WTC11 (cell line): ENCODE measurements at regions of chr3 and their contacts with region 1.

Region 1: DNA sequence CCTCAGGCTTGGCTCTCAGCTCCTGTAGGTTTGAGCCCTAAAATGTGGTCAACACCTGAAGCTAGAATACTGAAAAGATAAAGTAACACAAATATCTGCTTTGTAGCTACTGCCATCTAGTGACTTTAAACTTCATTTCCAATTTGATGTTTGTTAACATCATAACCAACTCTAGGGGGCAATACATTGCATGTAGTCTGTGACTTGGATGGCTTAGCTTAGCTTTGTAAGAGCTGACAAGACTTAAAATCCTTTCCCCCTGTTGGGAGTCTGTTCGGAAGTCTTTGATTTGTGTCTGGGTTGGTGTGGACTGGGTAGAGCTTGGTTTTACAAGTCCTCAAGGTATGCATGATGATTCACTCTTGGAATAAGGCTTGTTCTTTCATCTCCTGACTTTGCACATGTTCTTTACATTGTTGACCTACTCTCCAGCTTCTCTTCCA is 51.7 kb downstream of the SCN11A start:
- DNase-seq: no peak
- ATAC-seq: peak; percentile 96
- H3K4me3 Mint-ChIP-seq: no peak overlapping the region
- H3K27ac Mint-ChIP-seq: no peak overlapping the region
- H3K4me1 Mint-ChIP-seq: peaks cover 8% of the 10 kb centered on the region
- H3K27me3 Mint-ChIP-seq: no peaks in the 10 kb centered on the region
- CTCF ChIP-seq: peak; percentile 39

Region 2: DNA sequence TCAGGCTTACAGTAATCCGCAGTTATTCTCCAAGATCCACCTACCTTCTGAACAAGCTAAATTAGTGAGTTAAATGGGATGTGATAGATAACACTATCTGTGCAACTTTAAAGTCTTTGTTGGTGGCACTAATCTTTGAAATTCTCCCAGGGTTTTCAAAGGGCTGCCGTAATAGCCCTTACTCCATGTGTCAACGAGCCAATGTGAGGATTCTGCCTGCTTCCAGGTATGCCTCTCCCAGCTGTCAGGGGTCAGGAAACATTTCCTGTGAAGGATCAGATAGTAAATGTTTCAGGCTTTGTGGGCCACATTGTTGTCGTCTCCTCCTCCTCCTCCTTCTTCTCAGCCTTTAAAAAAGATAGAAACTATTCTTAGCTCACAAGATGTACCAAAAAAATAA is 330.4 kb before region 1 on chr3:
- CTCF ChIA-PET with region 1: interaction called, 15 read pairs
- POLR2A ChIA-PET with region 1: interaction called, 3 read pairs
- DNase-seq: no peak
- ATAC-seq: peak; percentile 57
- H3K4me3 Mint-ChIP-seq: no peak overlapping the region
- H3K27ac Mint-ChIP-seq: 0 out of 2 replicates have a peak overlapping the region, but pooled peaks have one; percentile 3
- H3K4me1 Mint-ChIP-seq: peaks cover 6% of the 10 kb centered on the region
- H3K27me3 Mint-ChIP-seq: no peaks in the 10 kb centered on the region
- CTCF ChIP-seq: no peak

Region 3: DNA sequence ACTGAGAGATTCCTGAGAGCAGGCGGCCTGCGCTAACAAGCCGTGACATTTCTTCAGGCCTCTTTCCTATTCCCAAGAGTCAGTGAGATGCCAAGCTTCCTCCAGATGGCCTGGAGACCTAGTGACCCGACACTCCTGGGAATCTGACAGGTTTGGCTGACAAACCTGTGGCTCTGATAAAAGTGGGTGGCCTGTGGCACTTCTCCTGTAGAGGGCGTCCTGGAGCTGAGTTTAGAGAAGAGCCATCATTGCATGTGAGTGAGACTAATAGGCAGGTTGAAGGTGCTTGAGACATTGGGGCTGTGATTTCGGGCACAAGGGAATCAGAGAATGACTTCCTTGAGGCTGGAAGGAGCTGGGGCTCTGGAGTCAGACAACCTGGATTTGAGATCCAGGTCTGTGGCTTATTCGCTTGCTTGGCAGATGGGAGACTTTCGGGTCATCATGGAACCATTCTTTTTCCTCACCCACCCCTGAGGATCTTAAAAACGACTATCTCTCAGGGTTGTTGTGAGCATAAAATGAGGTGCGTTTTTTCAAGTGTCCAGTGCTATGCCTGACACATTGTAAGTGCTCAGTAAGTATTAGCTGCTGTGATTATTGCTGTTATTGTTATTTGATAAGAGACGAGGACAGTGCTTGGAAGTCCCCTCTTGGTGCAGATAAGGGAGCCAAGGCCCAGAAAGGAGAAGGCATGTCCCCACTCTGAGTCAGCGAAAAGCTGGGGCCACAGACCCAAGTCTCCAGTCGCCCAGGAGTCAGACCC is 261.2 kb before region 1 on chr3:
- CTCF ChIA-PET with region 1: interaction called, 56 read pairs
- POLR2A ChIA-PET with region 1: no interaction called
- DNase-seq: peak; percentile 91
- ATAC-seq: peak; percentile 93
- H3K4me3 Mint-ChIP-seq: no peak overlapping the region
- H3K27ac Mint-ChIP-seq: no peak overlapping the region
- H3K4me1 Mint-ChIP-seq: peaks cover 10% of the 10 kb centered on the region
- H3K27me3 Mint-ChIP-seq: peaks cover 2% of the 10 kb centered on the region; the same call in 1 of the 2 replicates
- CTCF ChIP-seq: peak; percentile 80

Region 4: GRCh38 chr3:38907426-38907825 is 92.6 kb before region 1 on chr3:
- CTCF ChIA-PET with region 1: interaction called, 31 read pairs
- POLR2A ChIA-PET with region 1: no interaction called
- DNase-seq: no peak
- ATAC-seq: no peak
- H3K4me3 Mint-ChIP-seq: no peak overlapping the region
- H3K27ac Mint-ChIP-seq: no peak overlapping the region
- H3K4me1 Mint-ChIP-seq: no peaks in the 10 kb centered on the region
- H3K27me3 Mint-ChIP-seq: peaks cover 11% of the 10 kb centered on the region
- CTCF ChIP-seq: no peak

Region 5: DNA sequence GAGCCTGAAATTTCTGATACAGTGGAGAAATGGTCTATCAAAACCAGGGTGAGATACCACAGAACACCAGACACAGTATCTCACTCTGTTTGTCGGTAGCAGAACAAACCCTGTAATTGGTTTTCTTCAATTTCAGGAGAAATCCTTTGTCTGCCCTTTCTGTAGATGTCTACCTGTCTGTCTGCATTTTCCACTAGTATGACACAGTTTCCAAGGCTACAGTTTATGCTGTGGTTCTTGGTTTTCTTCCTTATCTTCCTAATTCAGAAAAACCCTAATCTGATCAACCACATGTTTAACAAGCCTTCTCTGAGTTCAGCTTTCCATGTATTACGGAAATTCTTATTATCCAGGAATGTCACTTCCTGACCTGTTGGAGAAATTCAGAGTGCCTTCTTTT is 19.1 kb before region 1 on chr3:
- CTCF ChIA-PET with region 1: interaction called, 14 read pairs
- POLR2A ChIA-PET with region 1: no interaction called
- DNase-seq: no peak
- ATAC-seq: no peak
- H3K4me3 Mint-ChIP-seq: no peak overlapping the region
- H3K27ac Mint-ChIP-seq: no peak overlapping the region
- H3K4me1 Mint-ChIP-seq: peaks cover 26% of the 10 kb centered on the region
- H3K27me3 Mint-ChIP-seq: no peaks in the 10 kb centered on the region
- CTCF ChIP-seq: no peak

Region 6: GRCh38 chr3:39025222-39025970 is 25.4 kb after region 1 on chr3:
- CTCF ChIA-PET with region 1: interaction called, 44 read pairs
- POLR2A ChIA-PET with region 1: no interaction called
- DNase-seq: no peak
- ATAC-seq: no peak
- H3K4me3 Mint-ChIP-seq: no peak overlapping the region
- H3K27ac Mint-ChIP-seq: no peak overlapping the region
- H3K4me1 Mint-ChIP-seq: no peaks in the 10 kb centered on the region
- H3K27me3 Mint-ChIP-seq: no peaks in the 10 kb centered on the region
- CTCF ChIP-seq: no peak